Upper lobe of right lung (tissue), 1 donor: ENCODE measurements at regions of chr6 and their contacts with region 1.

Region 1: GRCh38 chr6:159042003-159042825 is 2.6 kb downstream of the TAGAP start:
- DNase-seq: peak; percentile 71
- ATAC-seq: peak; percentile 89
- H3K4me3 ChIP-seq: peak overlapping the region; percentile 49
- H3K27ac ChIP-seq: peak overlapping the region; percentile 77
- H3K4me1 ChIP-seq: peaks cover 29% of the 10 kb centered on the region
- H3K27me3 ChIP-seq: no peaks in the 10 kb centered on the region
- CTCF ChIP-seq: peak; percentile 96

Region 2: DNA sequence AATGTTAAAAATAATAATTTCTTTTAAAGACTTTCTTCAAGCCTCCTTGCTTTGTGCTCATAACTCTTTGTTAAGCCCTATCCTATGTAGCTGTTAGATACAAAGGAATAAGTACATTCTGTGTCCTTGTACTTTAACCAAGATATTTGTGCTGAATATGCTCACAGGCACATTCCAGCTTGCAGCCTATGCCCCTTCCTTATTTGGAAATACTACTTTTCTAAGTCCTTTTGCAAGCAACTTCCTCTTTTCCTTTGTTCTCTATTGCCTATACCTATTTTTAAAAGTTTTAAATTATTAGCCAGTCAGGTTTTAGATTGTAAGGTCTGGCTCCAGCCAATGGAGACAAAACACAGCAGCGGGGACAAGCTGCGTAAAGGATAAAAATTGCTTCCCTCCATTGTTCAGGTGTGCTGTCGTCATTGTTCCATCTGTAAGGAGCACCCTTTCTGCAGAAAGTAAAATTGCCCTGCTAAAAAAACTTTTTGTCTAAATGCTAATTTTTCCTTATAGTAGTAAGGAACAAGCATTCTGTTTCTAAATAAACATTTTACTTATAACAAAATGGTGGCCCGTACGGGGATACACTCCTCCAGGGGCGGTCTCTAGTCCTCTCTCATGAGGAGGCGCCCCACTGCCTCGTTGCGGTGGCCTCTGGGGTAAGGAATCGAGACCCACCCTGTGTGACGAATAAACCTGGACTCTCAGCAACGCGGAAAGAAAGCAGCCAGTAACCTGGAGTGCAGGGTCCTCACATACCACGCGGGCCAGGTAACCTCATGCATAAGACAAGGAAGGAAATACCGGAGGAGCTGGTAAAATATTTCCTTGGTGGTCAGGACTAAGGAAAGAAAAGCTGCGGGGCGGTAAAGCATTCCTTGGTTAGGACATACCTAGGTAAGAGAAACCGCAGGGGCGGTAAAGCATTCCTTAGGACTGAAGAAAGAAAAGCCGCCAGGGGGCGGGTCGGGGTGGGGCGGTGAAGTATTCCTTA is 312.0 kb before region 1 on chr6:
- intact Hi-C with region 1: no loop called
- DNase-seq: no peak
- ATAC-seq: no peak
- H3K4me3 ChIP-seq: no peak overlapping the region
- H3K27ac ChIP-seq: no peak overlapping the region
- H3K4me1 ChIP-seq: no peaks in the 10 kb centered on the region
- H3K27me3 ChIP-seq: no peaks in the 10 kb centered on the region
- CTCF ChIP-seq: no peak

Region 3: DNA sequence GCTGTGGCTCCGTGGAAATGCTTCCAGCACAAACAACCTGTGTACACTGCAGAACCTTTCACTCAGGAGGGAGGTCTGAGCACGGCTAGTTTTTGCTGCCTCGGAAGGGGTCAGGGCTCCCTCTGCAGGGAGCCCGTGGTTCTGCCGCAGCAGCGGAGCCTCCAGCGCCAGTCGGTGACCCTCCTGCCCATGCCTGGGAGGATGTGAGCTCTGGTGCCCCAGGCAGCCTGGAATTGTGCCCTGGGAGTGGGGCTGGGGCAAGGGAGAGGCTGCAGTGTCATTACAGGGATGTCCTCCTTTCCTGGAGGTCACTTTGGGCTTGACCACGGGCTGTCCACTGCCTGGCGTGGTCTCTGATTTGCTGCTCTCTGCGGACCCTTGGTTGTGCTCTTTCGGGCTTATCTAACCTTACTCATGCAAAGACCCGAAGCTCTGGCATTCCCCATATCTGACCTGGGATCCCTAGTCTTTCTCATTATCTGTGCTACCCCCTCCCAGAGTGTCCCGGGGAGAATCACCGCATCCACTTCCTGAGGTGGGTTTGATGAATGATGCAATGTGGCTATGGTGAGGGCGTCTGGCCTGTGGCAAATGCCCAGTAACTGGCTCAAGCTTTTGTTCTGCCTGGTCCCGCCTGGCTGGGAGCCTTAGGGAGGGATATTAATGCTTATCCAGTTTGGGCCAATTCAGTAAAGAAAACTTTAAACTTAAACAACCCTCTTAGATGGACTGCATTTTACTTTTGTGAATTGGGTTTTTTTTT is 62.1 kb after region 1 on chr6:
- intact Hi-C with region 1: loop called (anchors 10 kb)
- DNase-seq: peak; percentile 82
- ATAC-seq: peak; percentile 94
- H3K4me3 ChIP-seq: no peak overlapping the region
- H3K27ac ChIP-seq: no peak overlapping the region
- H3K4me1 ChIP-seq: peaks cover 8% of the 10 kb centered on the region
- H3K27me3 ChIP-seq: no peaks in the 10 kb centered on the region
- CTCF ChIP-seq: peak; percentile 89

Region 4: GRCh38 chr6:159151266-159151855 is 109.1 kb after region 1 on chr6:
- intact Hi-C with region 1: no loop called
- DNase-seq: no peak
- ATAC-seq: peak; percentile 93
- H3K4me3 ChIP-seq: no peak overlapping the region
- H3K27ac ChIP-seq: no peak overlapping the region
- H3K4me1 ChIP-seq: no peaks in the 10 kb centered on the region
- H3K27me3 ChIP-seq: no peaks in the 10 kb centered on the region
- CTCF ChIP-seq: peak; percentile 88